Common myeloid progenitor, CD34-positive (primary cell): ENCODE measurements at regions of chr1 and their contacts with region 1.

Region 1: DNA sequence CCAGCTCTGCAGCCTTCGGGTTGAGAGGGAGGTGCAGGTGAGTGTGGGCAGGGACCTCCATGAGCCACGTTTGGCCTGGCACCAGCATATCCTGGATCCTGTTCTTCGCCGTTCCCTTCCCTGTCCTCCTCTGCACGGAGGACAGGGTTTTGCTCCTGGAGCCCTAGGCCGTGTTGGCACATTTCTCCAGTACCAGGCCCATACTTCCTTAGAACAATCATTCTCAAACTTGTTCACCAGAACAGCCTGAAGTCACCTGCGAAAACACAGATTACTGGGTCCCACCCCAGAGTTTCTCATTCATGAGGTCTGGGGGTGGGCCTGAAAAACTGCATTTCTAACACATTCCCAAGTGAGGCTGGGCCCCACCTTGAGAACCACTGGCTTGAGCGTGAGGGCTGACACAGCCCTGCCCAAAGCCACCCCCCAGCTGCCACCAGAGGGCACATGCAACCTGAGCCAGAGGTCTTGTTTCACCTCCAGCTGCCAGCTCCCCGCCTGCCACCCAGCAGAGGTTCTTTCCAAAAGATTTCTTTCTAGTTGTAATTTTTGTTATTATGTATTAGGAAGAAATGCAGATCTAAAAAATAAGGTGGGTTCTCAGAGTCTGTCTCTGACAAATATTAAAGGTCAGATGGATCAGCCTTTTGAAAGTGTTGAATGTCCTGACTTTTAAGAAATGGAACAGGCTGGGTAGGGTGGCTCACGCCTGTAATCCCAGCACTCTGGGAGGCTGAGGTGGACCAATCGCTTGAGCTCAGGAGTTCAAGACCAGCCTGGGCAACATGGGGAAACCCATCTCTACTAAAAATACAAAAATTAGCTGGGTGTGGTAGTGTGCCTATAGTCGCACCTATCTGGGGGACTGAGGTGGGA is 39.6 kb upstream of the LDLRAP1 start:
- DNase-seq: peak; percentile 53 to 76 (median 73)
- H3K4me3 ChIP-seq: no peak overlapping the region
- H3K27ac ChIP-seq: no peak overlapping the region
- H3K4me1 ChIP-seq: peaks cover 2 to 17% (median 12%) of the 10 kb centered on the region in 4 experiments
- H3K27me3 ChIP-seq: no peaks in the 10 kb centered on the region

Region 2: DNA sequence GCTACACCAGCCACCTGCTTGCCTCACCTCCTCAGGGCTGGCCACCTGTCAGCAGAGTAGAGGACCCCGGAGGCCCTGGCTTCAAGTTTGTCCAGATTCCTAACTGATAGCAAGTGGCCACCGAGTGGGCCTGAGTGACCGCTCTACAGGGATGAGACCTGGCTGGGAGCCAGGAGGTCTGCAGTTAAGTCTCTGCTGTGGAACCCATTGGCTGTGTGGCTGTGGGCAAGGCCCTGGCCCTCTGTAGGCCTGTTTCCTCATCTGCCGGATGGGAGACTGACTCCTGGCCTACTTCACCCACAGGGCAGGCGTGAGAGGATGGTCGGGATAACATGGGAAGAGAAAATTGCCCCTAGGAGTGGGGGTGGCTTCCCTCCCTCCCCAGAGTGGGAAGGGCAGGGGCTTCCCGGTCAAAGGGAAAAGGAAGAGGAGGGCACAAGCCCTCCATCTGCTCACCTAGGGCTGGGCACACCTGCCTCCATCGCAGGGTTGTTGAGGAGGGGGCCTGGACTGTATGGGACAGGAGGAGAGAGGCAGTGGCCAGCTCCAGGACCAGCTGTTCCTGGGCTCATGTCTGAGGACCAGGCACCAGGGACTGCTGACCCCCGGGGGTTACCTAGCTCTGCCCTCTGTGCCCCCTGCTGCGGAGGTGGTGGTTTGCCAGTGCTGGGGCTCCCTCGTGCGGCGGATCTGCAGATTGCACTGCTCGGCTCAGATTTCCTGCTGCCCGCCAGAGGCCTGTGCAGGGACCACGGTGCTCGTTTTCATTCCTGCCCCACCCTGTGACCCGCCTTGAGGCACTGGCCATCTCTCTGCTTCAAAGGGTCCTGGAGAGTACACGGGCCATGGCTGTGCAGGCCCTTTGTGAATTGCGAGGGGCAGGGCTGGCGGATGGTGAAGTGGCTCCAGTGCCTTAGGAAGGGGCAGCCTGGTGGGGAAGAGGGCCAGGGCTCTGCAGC is 306.8 kb after region 1 on chr1:
- CTCF ChIA-PET with region 1: interaction called, 69 read pairs
- POLR2A ChIA-PET with region 1: no interaction called
- DNase-seq: peak; percentile 50 to 70 (median 58)
- H3K4me3 ChIP-seq: no peak overlapping the region
- H3K27ac ChIP-seq: no peak overlapping the region
- H3K4me1 ChIP-seq: peaks cover 0 to 21% (median 13%) of the 10 kb centered on the region in 4 experiments
- H3K27me3 ChIP-seq: no peaks in the 10 kb centered on the region